Mammary epithelial cell (primary cell): ENCODE measurements at regions of chr5 and their contacts with region 1.

Region 1: GRCh38 chr5:154697371-154697770 is 57.8 kb upstream of the LARP1 start:
- DNase-seq: no peak
- H3K4me3 ChIP-seq: no peak overlapping the region
- H3K27ac ChIP-seq: no peak overlapping the region
- H3K4me1 ChIP-seq: peaks cover 3% of the 10 kb centered on the region
- H3K27me3 ChIP-seq: no peaks in the 10 kb centered on the region
- CTCF ChIP-seq: no peak

Region 2: DNA sequence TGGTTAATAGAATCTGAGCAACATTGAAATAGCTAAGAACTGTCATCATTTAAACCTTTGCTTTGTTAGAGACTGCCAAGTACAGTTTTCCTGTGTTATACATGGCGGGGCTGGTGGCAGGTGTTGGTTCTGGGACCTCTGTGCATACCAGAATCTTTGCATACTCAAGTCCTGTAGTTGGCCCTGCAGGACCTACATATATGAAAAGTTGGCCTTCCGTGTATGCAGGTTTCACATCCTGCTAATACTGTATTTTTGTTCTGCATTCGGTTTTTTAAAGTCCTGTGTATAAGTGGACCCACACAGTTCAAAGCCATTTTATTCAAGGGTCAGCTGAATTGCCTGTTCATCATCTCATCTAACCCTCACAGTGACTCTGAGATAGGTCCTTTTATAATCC is 94.2 kb after region 1 on chr5:
- CTCF ChIA-PET with region 1: no interaction called
- dilution Hi-C with region 1: loop called (anchors 10 kb)
- in situ Hi-C with region 1: no loop called
- intact Hi-C with region 1: no loop called
- DNase-seq: no peak
- H3K4me3 ChIP-seq: no peak overlapping the region
- H3K27ac ChIP-seq: no peak overlapping the region
- H3K4me1 ChIP-seq: no peaks in the 10 kb centered on the region
- H3K27me3 ChIP-seq: no peaks in the 10 kb centered on the region
- CTCF ChIP-seq: no peak